ENCODE measurements at regions of chr1 and their contacts with region 1.

Region 1: DNA sequence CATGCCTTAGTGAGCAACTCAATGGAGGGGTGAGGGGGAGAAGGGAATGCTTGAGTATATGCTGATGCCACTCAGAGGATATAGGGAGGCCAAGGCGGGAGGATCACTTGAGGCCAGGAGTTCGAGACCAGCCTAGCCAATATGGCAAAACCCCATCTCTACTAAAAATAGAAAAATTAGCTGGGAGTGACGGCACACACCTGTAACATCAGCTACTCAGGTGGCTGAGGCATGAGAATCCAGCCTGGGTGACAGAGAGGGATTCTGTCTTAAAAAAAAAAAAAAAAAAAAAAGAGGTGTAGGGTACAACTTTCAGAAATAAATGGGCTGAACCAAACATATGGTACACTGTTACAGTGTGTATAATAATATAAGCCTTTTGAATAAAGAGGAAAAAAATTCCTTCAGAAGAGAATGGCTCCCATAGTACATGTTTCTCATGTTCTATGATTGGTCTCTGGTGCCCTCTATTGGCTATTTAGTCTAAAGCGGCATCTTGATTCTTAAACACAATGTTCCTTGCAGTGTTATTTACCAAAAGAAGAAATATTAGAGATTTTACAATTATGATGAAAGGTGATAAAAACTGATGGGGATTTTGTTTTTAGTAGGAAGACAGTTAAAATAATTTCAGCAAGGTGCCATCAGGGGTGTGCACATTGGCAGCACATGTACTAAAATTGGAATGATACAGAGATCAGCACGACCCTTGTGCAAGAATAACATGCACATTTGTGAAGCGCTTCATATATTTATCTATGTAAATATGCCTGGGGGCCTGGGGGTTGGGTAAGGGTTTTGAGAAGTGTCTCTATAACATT is 109.8 kb downstream of the PATJ start:
- DNase-seq: no peak
- ATAC-seq: peak; percentile 70 to 76
- H3K4me3 ChIP-seq: no peak overlapping the region
- H3K27ac ChIP-seq: no peak overlapping the region
- H3K4me1 ChIP-seq: no peaks in the 10 kb centered on the region
- H3K27me3 ChIP-seq: no peaks in the 10 kb centered on the region

Region 2: DNA sequence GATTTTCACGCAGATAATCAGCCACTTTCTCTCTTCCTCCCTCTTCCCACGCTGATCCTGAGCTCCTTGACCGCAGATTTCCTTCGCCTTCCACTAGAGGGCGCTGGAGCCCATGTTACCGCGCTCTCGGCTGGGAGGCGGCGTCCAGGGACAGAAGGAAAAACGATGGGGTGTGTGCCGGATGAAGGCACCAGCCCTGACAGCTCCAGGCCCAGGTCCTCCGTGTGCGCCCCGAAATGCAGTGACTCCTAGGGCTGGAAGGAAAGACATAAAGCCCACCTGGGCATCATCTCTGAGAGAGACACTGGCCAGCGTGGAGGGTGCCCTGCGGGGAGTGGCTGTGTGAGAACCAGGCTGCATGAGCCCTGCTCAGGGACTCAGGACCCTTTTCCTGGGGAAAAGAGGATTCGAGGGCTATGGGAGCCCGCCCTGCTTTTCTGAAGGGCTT is 1880.6 kb before region 1 on chr1:
- intact Hi-C with region 1: loop called in 1 of 4 experiments (anchors 10 kb)
- DNase-seq: peak; percentile 65 to 86 (median 83)
- ATAC-seq: peak; percentile 86 to 90
- H3K4me3 ChIP-seq: no peak overlapping the region
- H3K27ac ChIP-seq: no peak overlapping the region
- H3K4me1 ChIP-seq: no peaks in the 10 kb centered on the region
- H3K27me3 ChIP-seq: no peaks in the 10 kb centered on the region

Region 3: DNA sequence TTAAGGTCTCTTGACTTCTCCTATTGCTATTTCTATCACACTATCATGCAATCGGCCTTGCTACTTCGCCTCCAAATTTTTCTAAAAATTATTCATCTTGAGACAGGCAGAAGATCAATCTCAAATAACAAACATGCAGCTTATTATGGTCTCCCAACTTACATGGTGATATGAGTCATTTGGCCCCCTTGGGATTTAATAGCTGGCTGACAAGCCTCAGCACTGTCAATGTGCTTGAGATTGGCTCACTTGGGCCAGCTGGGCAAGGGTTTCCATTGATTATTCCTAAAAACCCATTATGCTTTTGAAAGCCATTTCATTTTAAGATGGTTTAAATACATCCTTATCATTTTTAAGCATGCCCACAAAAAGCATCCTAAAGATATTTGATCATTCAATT is 994.2 kb before region 1 on chr1:
- intact Hi-C with region 1: loop called in 1 of 4 experiments (anchors 10 kb)
- DNase-seq: no peak
- ATAC-seq: no peak
- H3K4me3 ChIP-seq: no peak overlapping the region
- H3K27ac ChIP-seq: no peak overlapping the region
- H3K4me1 ChIP-seq: peaks cover 2% of the 10 kb centered on the region
- H3K27me3 ChIP-seq: no peaks in the 10 kb centered on the region

Region 4: DNA sequence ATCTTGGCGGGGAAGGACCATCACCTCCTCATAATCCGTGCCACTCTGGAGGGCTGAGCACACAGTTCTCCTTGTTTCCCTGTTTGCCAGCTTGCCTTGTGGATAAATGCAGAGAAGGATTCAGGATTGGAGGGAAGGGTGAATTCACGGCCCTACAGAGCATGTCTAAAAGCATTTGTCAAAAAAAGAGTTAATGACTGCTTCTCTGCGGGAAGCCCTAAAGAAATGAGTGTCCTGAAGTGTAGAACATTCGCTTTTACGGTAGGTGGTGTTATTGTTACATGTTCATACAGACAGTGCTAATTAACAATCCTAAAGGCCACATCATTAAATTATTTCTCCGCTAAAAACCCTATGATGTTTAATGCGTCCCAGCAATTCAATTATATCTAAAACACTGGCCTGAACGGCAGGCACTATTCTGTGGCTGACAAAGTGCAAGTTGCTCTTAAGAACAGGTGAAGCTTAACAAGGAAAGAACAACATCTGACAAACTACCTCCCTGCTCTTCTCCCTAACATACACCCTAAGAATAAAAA is 882.0 kb before region 1 on chr1:
- intact Hi-C with region 1: loop called in 2 of 4 experiments (anchors 5 to 10 kb)
- DNase-seq: no peak
- ATAC-seq: peak; percentile 66 to 74
- H3K4me3 ChIP-seq: no peak overlapping the region
- H3K27ac ChIP-seq: no peak overlapping the region
- H3K4me1 ChIP-seq: no peaks in the 10 kb centered on the region
- H3K27me3 ChIP-seq: no peaks in the 10 kb centered on the region

Region 5: GRCh38 chr1:60978421-60979357 is 873.4 kb before region 1 on chr1:
- intact Hi-C with region 1: loop called in 2 of 4 experiments (anchors 5 to 10 kb)
- DNase-seq: peak in 1 of 3 donors; percentile 48
- ATAC-seq: peak; percentile 56 to 68
- H3K4me3 ChIP-seq: no peak overlapping the region
- H3K27ac ChIP-seq: no peak overlapping the region
- H3K4me1 ChIP-seq: no peaks in the 10 kb centered on the region
- H3K27me3 ChIP-seq: no peaks in the 10 kb centered on the region